ENCODE measurements at regions of chr7 and their contacts with region 1.

Region 1: GRCh38 chr7:128322040-128322643 is 21.6 kb downstream of the RBM28 start:
- DNase-seq: peak; percentile 48
- ATAC-seq: peak; percentile 81
- H3K4me3 ChIP-seq: no peak overlapping the region
- H3K27ac ChIP-seq: no peak overlapping the region
- H3K4me1 ChIP-seq: no peaks in the 10 kb centered on the region
- H3K27me3 ChIP-seq: no peaks in the 10 kb centered on the region
- CTCF ChIP-seq: peak; percentile 77
- EP300 ChIP-seq: no peak
- POLR2A ChIP-seq: no peak
- RAD21 ChIP-seq: no peak

Region 2: DNA sequence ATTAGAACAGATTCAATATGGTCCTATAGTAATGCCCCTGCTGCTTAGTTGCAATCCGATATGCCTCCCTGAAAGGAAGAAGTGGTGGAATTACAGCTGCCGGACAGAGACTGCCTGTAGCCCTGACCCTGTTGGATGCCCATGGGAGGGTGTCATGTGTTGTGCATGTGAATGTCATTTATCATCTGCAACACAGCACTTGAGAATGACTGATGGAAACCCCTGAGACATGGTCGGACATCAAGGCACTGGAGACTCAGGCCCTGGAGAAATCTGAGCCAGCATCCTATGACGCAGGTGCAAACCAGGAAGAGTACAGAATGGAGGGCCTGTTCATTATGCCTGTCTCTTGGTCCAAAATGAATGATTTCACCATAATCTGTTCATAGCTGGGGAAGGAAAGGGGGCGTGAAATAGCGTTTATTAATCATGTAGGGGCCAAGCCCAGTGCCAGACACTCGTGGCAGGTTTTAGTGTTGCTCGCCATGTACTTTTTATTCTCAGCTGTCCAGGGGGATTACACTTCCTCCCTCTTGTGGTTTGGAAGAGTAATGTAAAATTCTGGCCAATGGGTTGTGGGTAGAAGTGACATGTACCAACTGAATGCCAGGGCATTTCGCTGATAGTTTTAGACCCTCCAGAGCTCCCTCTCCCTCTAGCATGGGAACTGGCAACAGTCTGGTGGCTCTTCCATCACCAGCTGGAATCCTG is 104.0 kb before region 1 on chr7:
- CTCF ChIA-PET with region 1: interaction called, 3 read pairs
- POLR2A ChIA-PET with region 1: no interaction called
- in situ Hi-C with region 1: no loop called
- intact Hi-C with region 1: loop called (anchors 1 kb)
- DNase-seq: peak; percentile 9
- ATAC-seq: peak; percentile 74
- H3K4me3 ChIP-seq: no peak overlapping the region
- H3K27ac ChIP-seq: no peak overlapping the region
- H3K4me1 ChIP-seq: no peaks in the 10 kb centered on the region
- H3K27me3 ChIP-seq: peaks cover 5 to 49% of the 10 kb centered on the region in 2 experiments; a peak in 3 of 5 replicates
- CTCF ChIP-seq: peak; percentile 17; the same call in 1 of the 2 replicates
- EP300 ChIP-seq: no peak
- POLR2A ChIP-seq: no peak
- RAD21 ChIP-seq: no peak

Region 3: GRCh38 chr7:128256036-128256435 is 66.1 kb before region 1 on chr7:
- CTCF ChIA-PET with region 1: no interaction called
- POLR2A ChIA-PET with region 1: no interaction called
- in situ Hi-C with region 1: no loop called
- intact Hi-C with region 1: loop called (anchors 1 kb)
- DNase-seq: no peak
- ATAC-seq: no peak
- H3K4me3 ChIP-seq: no peak overlapping the region
- H3K27ac ChIP-seq: no peak overlapping the region
- H3K4me1 ChIP-seq: no peaks in the 10 kb centered on the region
- H3K27me3 ChIP-seq: peaks cover 0 to 13% of the 10 kb centered on the region in 2 experiments; a peak in 2 of 5 replicates
- CTCF ChIP-seq: no peak
- EP300 ChIP-seq: no peak
- POLR2A ChIP-seq: no peak
- RAD21 ChIP-seq: no peak

Region 4: DNA sequence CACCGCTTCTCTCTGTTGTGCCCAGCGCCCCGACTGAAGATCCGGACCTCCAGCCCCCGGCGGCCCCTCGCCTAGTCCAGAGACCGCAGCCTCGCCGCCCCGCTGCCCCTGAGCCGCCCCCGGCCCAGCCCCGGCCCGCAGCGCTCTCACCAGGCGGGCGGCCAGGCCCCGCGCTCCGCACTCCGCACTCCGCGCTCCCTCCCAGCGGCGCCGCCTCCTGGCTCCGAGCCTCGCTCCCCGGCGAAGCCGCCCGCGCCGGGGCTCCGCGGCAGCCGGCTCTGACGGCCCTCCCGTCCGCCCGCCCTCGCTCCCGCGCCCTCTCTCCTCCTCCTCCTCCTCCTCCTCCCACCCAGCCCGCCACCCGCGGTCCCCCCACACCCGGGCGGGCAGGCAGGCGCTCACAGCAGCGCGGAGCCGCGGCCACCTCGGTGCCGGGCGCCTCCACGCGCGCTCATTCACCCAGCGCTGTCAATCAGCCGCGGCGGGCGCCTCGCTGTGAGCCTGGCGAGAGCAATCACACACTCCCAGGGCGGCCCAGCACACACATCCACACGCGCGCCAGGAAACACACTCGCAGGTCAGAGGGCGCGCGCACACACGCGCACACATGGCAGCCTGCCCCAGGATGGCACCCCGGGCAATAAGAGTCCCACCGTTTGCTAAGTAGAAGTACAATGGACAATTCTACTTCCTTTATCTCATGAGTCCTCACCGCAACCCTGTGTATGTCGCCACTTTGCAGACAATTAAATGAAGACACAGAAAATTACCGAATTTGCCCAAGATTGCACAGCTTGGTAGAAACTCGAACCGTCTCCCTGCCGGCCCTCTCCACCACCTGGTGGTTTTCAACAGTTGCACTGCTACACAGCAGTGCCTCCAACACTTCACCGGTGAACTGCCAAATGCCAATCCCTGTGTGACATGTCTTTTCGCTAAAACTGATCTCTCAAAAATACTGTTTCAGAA is 39.6 kb after region 1 on chr7 and contains the start of gene PRRT4:
- CTCF ChIA-PET with region 1: no interaction called
- POLR2A ChIA-PET with region 1: no interaction called
- in situ Hi-C with region 1: no loop called
- intact Hi-C with region 1: no loop called
- DNase-seq: no peak
- ATAC-seq: peak; percentile 91
- H3K4me3 ChIP-seq: peak within 1 kb of the TSS; percentile 36 to 71 (median 57); a peak in 5 of 6 replicates
- H3K27ac ChIP-seq: no peak within 1 kb of the TSS
- H3K4me1 ChIP-seq: peaks cover 13% of the 10 kb centered on the region; the same call in 1 of the 2 replicates
- H3K27me3 ChIP-seq: peaks cover 21 to 83% of the 10 kb centered on the region in 2 experiments; a peak in 4 of 5 replicates
- CTCF ChIP-seq: no peak
- EP300 ChIP-seq: no peak
- POLR2A ChIP-seq: no peak
- RAD21 ChIP-seq: no peak
- total RNA-seq, gene PRRT4: not detected in 2 replicates